ENCODE measurements at regions of chr15 and their contacts with region 1.

Region 1: GRCh38 chr15:40941528-40942336 is 11.5 kb upstream of the CHAC1 start:
- DNase-seq: peak; percentile 78
- ATAC-seq: peak; percentile 81
- H3K4me3 Mint-ChIP-seq: peak overlapping the region; percentile 73
- H3K27ac Mint-ChIP-seq: peak overlapping the region; percentile 35
- H3K4me1 Mint-ChIP-seq: peaks cover 34% of the 10 kb centered on the region
- H3K27me3 Mint-ChIP-seq: peaks cover 4% of the 10 kb centered on the region
- CTCF ChIP-seq: no peak

Region 2: GRCh38 chr15:40928821-40929659 is 12.7 kb before region 1 on chr15 and contains the start of gene DLL4:
- CTCF ChIA-PET with region 1: interaction called, 16 read pairs
- POLR2A ChIA-PET with region 1: interaction called, 8 read pairs
- intact Hi-C with region 1: loop called (anchors 1 kb)
- DNase-seq: peak; percentile 45
- ATAC-seq: peak; percentile 43
- H3K4me3 Mint-ChIP-seq: peak within 1 kb of the TSS; percentile 77
- H3K27ac Mint-ChIP-seq: no peak within 1 kb of the TSS
- H3K4me1 Mint-ChIP-seq: peaks cover 55% of the 10 kb centered on the region
- H3K27me3 Mint-ChIP-seq: peaks cover 53% of the 10 kb centered on the region
- CTCF ChIP-seq: no peak
- total RNA-seq, gene DLL4: 0.05 TPM in 1 of 2 replicates, not detected in the other

Region 3: GRCh38 chr15:40952901-40953712 is 11.4 kb after region 1 on chr15 and contains the start of gene CHAC1:
- CTCF ChIA-PET with region 1: interaction called, 20 read pairs
- POLR2A ChIA-PET with region 1: interaction called, 78 read pairs
- intact Hi-C with region 1: loop called (anchors 1 kb)
- DNase-seq: peak; percentile 88
- ATAC-seq: peak; percentile 94
- H3K4me3 Mint-ChIP-seq: peak within 1 kb of the TSS; percentile 93
- H3K27ac Mint-ChIP-seq: peak within 1 kb of the TSS; percentile 92
- H3K4me1 Mint-ChIP-seq: peaks cover 23% of the 10 kb centered on the region
- H3K27me3 Mint-ChIP-seq: peaks cover 7% of the 10 kb centered on the region
- CTCF ChIP-seq: no peak
- total RNA-seq, gene CHAC1: 22.3 and 27.3 TPM in 2 replicates

Region 4: GRCh38 chr15:41013698-41014414 is 72.1 kb after region 1 on chr15:
- CTCF ChIA-PET with region 1: interaction called, 5 read pairs
- POLR2A ChIA-PET with region 1: no interaction called
- intact Hi-C with region 1: loop called (anchors 5 kb)
- DNase-seq: no peak
- ATAC-seq: peak; percentile 61
- H3K4me3 Mint-ChIP-seq: no peak overlapping the region
- H3K27ac Mint-ChIP-seq: no peak overlapping the region
- H3K4me1 Mint-ChIP-seq: peaks cover 23% of the 10 kb centered on the region
- H3K27me3 Mint-ChIP-seq: no peaks in the 10 kb centered on the region
- CTCF ChIP-seq: no peak

Region 5: GRCh38 chr15:41561777-41562145 is 620.0 kb after region 1 on chr15:
- CTCF ChIA-PET with region 1: no interaction called
- POLR2A ChIA-PET with region 1: no interaction called
- intact Hi-C with region 1: no loop called
- DNase-seq: no peak
- ATAC-seq: no peak
- H3K4me3 Mint-ChIP-seq: no peak overlapping the region
- H3K27ac Mint-ChIP-seq: no peak overlapping the region
- H3K4me1 Mint-ChIP-seq: peaks cover 19% of the 10 kb centered on the region
- H3K27me3 Mint-ChIP-seq: peaks cover 31% of the 10 kb centered on the region
- CTCF ChIP-seq: no peak

Measured in activated B cell treated with CpG ODN at 0.5 μM for 24 hours (primary cell).